Transverse colon (tissue), 4 donors: ENCODE measurements at regions of chr3 and their contacts with region 1.

Region 1: DNA sequence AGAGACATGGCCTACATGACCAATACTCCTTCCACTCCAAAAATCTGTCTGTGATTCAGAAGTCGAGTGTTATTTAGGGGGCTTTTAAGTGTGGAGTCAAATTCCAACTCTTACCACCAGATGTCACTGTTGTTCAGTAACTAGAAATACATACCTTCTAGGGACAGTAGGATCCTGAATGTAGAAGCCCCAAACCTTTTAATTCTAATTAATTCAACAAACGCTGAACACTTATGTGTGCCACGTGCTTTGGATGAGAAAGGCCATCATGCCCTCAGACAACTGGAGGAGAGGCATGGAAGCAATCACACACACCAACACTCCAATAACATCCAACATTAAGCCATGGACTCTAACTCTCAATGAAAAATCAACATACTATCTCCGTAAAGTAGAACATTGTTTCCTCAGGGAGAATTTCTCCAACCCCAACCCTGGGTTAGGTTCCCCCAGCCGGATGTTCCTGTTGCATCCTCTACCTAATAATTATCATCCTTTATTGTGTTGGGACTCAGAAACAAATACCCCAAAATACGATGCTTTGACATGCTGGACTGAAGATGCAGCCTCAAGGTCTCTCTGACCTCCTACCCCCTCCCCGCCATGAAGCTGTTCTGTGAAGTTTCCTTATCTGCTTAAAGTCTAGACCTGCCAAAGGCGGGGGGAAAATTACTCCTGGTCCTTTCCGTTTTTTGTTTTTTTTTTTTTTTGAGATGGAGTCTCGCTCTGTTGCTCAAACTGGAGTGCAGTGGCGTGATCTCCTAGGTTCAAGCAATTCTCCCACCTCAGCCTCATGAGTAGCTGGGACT is 8.0 kb upstream of the CCDC13 start:
- DNase-seq: no peak
- H3K4me3 ChIP-seq: no peak overlapping the region
- H3K27ac ChIP-seq: peak overlapping the region; percentile 22 to 75 (median 54)
- H3K4me1 ChIP-seq: peaks cover 0 to 40% (median 12%) of the 10 kb centered on the region in 4 donors
- H3K27me3 ChIP-seq: no peaks in the 10 kb centered on the region
- CTCF ChIP-seq: peak; percentile 78 to 95 (median 82)
- EP300 ChIP-seq: no peak
- POLR2A ChIP-seq: no peak

Region 2: GRCh38 chr3:42581709-42582473 is 199.2 kb before region 1 on chr3 and contains the start of gene SEC22C:
- in situ Hi-C with region 1: no loop called
- intact Hi-C with region 1: no loop called
- DNase-seq: peak; percentile 95
- H3K4me3 ChIP-seq: peak within 1 kb of the TSS; percentile 64 to 80 (median 72)
- H3K27ac ChIP-seq: peak within 1 kb of the TSS; percentile 84 to 93 (median 90)
- H3K4me1 ChIP-seq: peaks cover 0 to 22% (median 8%) of the 10 kb centered on the region in 4 donors
- H3K27me3 ChIP-seq: no peaks in the 10 kb centered on the region
- CTCF ChIP-seq: peak in 2 of 5 experiments; percentile 23 to 31
- EP300 ChIP-seq: no peak
- POLR2A ChIP-seq: peak; percentile 78
- total RNA-seq, gene SEC22C: 22.7 to 66.3 (median 32.1) TPM

Region 3: DNA sequence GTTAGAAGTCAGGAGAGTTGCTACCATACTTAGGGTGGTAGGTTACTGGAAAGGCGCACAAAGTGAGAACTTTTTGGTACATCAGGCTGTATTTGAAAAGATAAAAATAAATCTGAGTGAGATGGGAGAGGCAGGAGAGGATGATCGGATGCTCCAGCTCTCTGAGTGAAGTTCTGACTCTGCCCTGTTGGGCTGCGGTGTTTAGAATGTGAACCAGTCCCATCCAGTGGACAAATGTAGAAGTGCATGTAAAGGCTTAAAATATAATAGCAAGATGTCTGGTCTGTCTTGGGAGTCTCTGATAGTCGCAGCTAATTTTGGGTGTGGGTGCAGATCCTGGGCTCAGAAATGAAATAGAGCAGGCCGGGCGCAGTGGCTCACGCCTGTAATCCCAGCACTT is 58.5 kb after region 1 on chr3:
- in situ Hi-C with region 1: loop called in 2 of 4 experiments (anchors 5 to 10 kb)
- intact Hi-C with region 1: loop called (anchors 5 kb)
- DNase-seq: peak; percentile 37
- H3K4me3 ChIP-seq: no peak overlapping the region
- H3K27ac ChIP-seq: no peak overlapping the region
- H3K4me1 ChIP-seq: peaks cover 0 to 9% (median 0%) of the 10 kb centered on the region in 4 donors
- H3K27me3 ChIP-seq: no peaks in the 10 kb centered on the region
- CTCF ChIP-seq: peak; percentile 78 to 94 (median 85)
- EP300 ChIP-seq: no peak
- POLR2A ChIP-seq: no peak

Region 4: DNA sequence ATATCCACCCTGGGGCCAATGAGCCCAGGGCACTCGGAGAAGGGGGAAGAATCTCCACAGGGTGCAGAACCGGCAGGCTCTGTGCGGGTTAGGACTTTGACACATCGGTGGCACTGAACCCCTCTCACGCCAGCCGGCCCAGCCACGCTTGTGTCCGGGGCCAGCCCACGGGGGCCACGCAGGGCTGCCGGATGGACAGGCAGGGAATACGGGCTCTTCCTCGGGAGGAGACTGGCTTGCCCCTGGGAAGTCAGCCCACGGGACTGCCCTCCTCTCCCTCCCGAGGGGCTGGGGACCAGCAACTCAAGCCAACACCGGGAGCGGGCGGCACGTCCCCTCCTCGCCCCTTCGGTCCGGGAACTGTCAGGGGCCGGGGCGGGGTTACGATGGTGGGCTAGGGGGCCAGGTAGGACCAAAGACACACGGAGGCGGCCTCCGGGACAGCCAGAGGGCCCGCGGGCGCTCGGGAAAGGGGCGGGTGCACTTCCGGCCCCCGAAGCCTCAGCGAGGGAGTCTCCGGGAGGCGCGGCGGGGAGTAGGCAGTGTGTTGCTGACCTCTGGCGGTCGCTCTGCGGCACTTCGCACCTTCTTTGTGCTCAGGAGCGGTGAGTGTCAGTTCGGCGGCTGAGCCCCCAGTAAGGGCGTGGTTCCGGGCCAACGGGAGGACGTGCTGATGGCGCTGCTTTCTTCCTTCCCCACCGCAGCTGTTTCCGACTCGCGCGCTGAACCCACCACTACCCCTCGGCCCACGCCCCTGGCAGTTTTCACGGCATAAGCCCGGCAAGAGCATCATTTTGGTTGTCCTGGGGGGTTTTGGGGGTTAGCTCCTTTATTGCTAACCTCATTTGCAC is 99.7 kb after region 1 on chr3:
- in situ Hi-C with region 1: no loop called
- intact Hi-C with region 1: loop called (anchors 1 kb)
- DNase-seq: peak; percentile 88
- H3K4me3 ChIP-seq: peak overlapping the region; percentile 44 to 89 (median 56)
- H3K27ac ChIP-seq: peak overlapping the region; percentile 49 to 72 (median 64)
- H3K4me1 ChIP-seq: peaks cover 3 to 10% (median 7%) of the 10 kb centered on the region in 4 donors
- H3K27me3 ChIP-seq: no peaks in the 10 kb centered on the region
- CTCF ChIP-seq: peak; percentile 90 to 92 (median 91)
- EP300 ChIP-seq: no peak
- POLR2A ChIP-seq: peak; percentile 38